ENCODE measurements at regions of chr1 and their contacts with region 1.

Region 1: GRCh38 chr1:112715264-112716053 is at the start of gene PPM1J:
- DNase-seq: peak; percentile 97
- ATAC-seq: peak; percentile 84
- H3K4me3 Mint-ChIP-seq: peak within 1 kb of the TSS; percentile 74
- H3K27ac Mint-ChIP-seq: no peak within 1 kb of the TSS
- H3K4me1 Mint-ChIP-seq: peaks cover 14% of the 10 kb centered on the region
- H3K27me3 Mint-ChIP-seq: peaks cover 18% of the 10 kb centered on the region
- total RNA-seq, gene PPM1J: 0.75 to 0.88 TPM

Region 2: GRCh38 chr1:112466078-112466660 is 249.3 kb before region 1 on chr1:
- CTCF ChIA-PET with region 1: interaction called, 4 read pairs
- POLR2A ChIA-PET with region 1: no interaction called
- intact Hi-C with region 1: loop called in 1 of 2 experiments (anchors 1 kb)
- DNase-seq: peak; percentile 93
- ATAC-seq: peak; percentile 97
- H3K4me3 Mint-ChIP-seq: peak overlapping the region; percentile 67
- H3K27ac Mint-ChIP-seq: peak overlapping the region; percentile 83
- H3K4me1 Mint-ChIP-seq: peaks cover 12% of the 10 kb centered on the region
- H3K27me3 Mint-ChIP-seq: peaks cover 15% of the 10 kb centered on the region

Region 3: GRCh38 chr1:112798292-112798691 is 82.8 kb after region 1 on chr1:
- CTCF ChIA-PET with region 1: interaction called, 157 read pairs
- POLR2A ChIA-PET with region 1: no interaction called
- intact Hi-C with region 1: no loop called
- DNase-seq: no peak
- ATAC-seq: no peak
- H3K4me3 Mint-ChIP-seq: no peak overlapping the region
- H3K27ac Mint-ChIP-seq: no peak overlapping the region
- H3K4me1 Mint-ChIP-seq: no peaks in the 10 kb centered on the region
- H3K27me3 Mint-ChIP-seq: peaks cover 2% of the 10 kb centered on the region

Region 4: GRCh38 chr1:112882271-112882744 is 166.8 kb after region 1 on chr1:
- CTCF ChIA-PET with region 1: interaction called, 5 read pairs
- POLR2A ChIA-PET with region 1: no interaction called
- intact Hi-C with region 1: loop called (anchors 2 to 5 kb)
- DNase-seq: no peak
- ATAC-seq: no peak
- H3K4me3 Mint-ChIP-seq: no peak overlapping the region
- H3K27ac Mint-ChIP-seq: no peak overlapping the region
- H3K4me1 Mint-ChIP-seq: no peaks in the 10 kb centered on the region
- H3K27me3 Mint-ChIP-seq: peaks cover 3% of the 10 kb centered on the region

Region 5: GRCh38 chr1:112981426-112981825 is 266.0 kb after region 1 on chr1:
- CTCF ChIA-PET with region 1: no interaction called
- POLR2A ChIA-PET with region 1: no interaction called
- intact Hi-C with region 1: no loop called
- DNase-seq: no peak
- ATAC-seq: no peak
- H3K4me3 Mint-ChIP-seq: no peak overlapping the region
- H3K27ac Mint-ChIP-seq: no peak overlapping the region
- H3K4me1 Mint-ChIP-seq: no peaks in the 10 kb centered on the region
- H3K27me3 Mint-ChIP-seq: no peaks in the 10 kb centered on the region

Region 6: GRCh38 chr1:113042285-113043143 is 327.1 kb after region 1 on chr1:
- CTCF ChIA-PET with region 1: no interaction called
- POLR2A ChIA-PET with region 1: no interaction called
- intact Hi-C with region 1: loop called in 1 of 2 experiments (anchors 10 kb)
- DNase-seq: peak; percentile 49
- ATAC-seq: peak; percentile 12
- H3K4me3 Mint-ChIP-seq: no peak overlapping the region
- H3K27ac Mint-ChIP-seq: no peak overlapping the region
- H3K4me1 Mint-ChIP-seq: peaks cover 17% of the 10 kb centered on the region
- H3K27me3 Mint-ChIP-seq: peaks cover 8% of the 10 kb centered on the region

Region 7: GRCh38 chr1:113389953-113390834 is 674.7 kb after region 1 on chr1 and contains the start of gene MAGI3:
- CTCF ChIA-PET with region 1: no interaction called
- POLR2A ChIA-PET with region 1: no interaction called
- intact Hi-C with region 1: loop called in 1 of 2 experiments (anchors 2 kb)
- DNase-seq: peak; percentile 97
- ATAC-seq: peak; percentile 97
- H3K4me3 Mint-ChIP-seq: peak within 1 kb of the TSS; percentile 86
- H3K27ac Mint-ChIP-seq: peak within 1 kb of the TSS; percentile 79
- H3K4me1 Mint-ChIP-seq: peaks cover 23% of the 10 kb centered on the region
- H3K27me3 Mint-ChIP-seq: peaks cover 5% of the 10 kb centered on the region
- total RNA-seq, gene MAGI3: 6.4 to 6.7 TPM

Region 8: DNA sequence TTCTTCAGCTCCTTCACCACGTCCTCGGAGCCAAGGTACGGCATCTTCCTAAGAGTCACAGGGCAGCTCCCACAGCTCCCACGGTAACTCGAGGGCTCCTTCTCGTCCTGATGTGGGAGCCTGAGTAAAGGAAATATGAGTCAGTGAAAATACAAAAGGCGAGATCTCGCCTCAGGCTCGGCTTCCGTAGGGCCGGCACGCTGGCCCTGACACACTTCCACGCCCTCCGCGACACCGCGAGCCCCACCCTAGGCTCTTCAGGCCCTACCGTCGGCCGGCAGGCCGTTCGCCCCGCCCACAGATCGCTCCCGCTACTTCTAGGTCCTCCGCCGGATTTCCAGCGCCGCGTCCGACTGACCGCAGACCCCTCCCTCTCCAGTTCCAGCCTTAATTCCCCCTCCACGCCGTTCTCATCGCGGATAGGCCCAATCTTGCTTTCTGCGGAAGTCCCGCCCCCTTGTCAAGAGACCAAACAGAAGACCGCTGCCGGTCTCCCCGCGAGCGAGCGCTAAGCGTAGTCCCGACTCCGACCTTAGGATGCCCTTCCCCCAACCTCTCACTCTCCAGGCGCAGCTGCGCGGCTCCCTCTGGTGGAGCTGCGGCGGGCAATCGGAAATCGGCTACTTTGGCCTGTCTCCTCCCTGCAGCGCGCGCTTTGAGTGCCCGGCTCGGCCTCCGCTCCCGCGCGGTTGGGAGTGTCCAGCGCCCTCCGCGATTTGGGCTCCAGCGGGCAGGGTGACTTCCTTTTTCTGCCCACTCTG is 1189.4 kb after region 1 on chr1 and contains the starts of genes AP4B1 and DCLRE1B:
- CTCF ChIA-PET with region 1: interaction called, 3 read pairs
- POLR2A ChIA-PET with region 1: no interaction called
- intact Hi-C with region 1: loop called in 1 of 2 experiments (anchors 1 kb)
- DNase-seq: peak; percentile 99
- ATAC-seq: peak; percentile 92
- H3K4me3 Mint-ChIP-seq: peak within 1 kb of the TSS; percentile 85
- H3K27ac Mint-ChIP-seq: peak within 1 kb of the TSS; percentile 96
- H3K4me1 Mint-ChIP-seq: peaks cover 55% of the 10 kb centered on the region
- H3K27me3 Mint-ChIP-seq: no peaks in the 10 kb centered on the region
- total RNA-seq, gene AP4B1: 27.7 to 39.2 TPM
- total RNA-seq, gene DCLRE1B: 18.2 to 21.8 TPM

Measured in activated CD4-positive, alpha-beta T cell treated with anti-CD3 and anti-CD28 coated beads for 36 hours (primary cell).